Heart right ventricle (tissue), 16 donors: ENCODE measurements at regions of chr15 and their contacts with region 1.

Region 1: DNA sequence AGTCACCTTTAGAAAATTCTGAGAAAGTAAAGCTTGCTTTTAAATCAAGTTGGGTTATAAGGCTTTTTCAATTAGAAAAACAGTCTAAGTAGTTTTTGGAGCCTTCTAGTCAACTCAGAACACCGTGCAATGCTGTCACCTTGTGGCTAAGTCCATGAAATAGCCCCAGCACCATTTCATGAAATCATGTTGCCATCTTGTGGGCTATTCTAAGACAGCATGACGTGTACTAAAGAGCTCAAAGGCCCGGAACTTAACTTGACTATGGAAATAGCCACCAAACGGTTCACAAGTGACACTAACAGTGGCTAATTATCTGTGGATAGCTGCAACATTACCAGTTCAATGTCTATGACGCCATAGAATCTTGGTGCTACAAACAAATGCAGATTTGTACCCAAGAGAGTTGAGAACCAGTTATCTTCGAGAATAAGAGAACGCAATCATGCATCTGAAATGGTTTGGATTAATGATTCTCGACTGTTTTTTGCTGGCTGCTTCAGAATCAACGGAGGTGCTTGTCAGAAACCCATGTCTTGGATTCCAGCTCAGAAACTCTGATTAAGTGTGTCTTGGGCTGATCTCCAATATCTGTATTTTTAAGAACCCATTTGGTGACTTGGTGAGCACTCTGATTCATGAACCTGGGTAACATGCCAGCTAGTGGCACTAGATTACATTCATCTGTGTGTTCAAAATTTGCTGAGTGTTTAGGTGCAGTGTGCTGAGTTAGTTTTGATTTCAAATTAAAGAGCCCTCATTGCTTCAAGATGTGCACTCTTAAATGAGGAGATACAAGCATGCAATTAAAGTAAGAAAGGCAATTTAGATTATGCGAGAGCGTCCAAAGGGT is 111.2 kb upstream of the MCTP2 start:
- DNase-seq: peak in 1 of 2 donors; percentile 73
- ATAC-seq: peak; percentile 90 to 97 (median 94)
- H3K4me3 ChIP-seq: no peak overlapping the region
- H3K27ac ChIP-seq: peak overlapping the region in 8 of 10 donors; percentile 1 to 81 (median 54)
- H3K4me1 ChIP-seq: peaks cover 0 to 17% (median 0%) of the 10 kb centered on the region in 9 donors
- H3K27me3 ChIP-seq: no peaks in the 10 kb centered on the region
- CTCF ChIP-seq: peak; percentile 77 to 95 (median 85)

Region 2: GRCh38 chr15:92797168-92797951 is 1322.8 kb before region 1 on chr15:
- intact Hi-C with region 1: loop called in 1 of 10 experiments (anchors 10 kb)
- DNase-seq: peak in 1 of 2 donors; percentile 65
- ATAC-seq: peak in 7 of 8 donors; percentile 59 to 76 (median 63)
- H3K4me3 ChIP-seq: no peak overlapping the region
- H3K27ac ChIP-seq: peak overlapping the region in 3 of 10 donors; percentile 38 to 64 (median 49)
- H3K4me1 ChIP-seq: peaks cover 0 to 20% (median 10%) of the 10 kb centered on the region in 9 donors
- H3K27me3 ChIP-seq: no peaks in the 10 kb centered on the region
- CTCF ChIP-seq: peak; percentile 65 to 86 (median 79)

Region 3: DNA sequence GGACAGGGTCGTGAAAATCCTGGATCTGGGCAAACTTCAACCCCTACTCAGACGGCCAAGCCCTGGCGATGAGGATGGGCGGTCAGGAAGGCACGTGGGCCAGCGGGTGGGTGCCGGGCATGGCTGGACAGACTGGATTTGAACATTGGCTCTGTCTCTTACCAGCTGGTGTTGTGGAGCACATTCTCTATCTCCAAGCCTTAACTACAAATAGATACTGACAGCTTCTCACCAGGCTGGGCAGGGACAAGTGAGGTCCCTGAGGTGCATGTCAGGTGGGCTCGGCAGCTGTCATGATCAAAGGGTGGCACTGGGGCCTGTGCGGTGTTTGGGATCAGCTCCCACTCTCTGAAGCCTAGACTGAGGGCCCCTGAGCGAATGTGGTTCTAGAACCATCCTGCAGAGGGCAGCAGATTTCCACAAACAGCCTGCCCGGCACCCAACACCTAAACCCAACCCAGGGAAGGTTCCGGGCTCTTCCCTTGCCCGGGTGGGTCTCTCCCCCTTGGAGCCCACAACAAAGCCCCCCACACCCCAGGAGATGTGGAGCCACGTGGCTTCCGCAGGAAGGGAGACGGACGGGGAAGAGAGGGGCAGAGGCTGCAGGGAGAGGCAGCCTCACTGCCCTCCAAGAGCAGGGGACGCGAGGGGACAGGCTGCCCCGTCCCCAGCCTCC is 1089.6 kb before region 1 on chr15:
- intact Hi-C with region 1: loop called (anchors 1 to 5 kb)
- DNase-seq: peak; percentile 55 to 75
- ATAC-seq: peak; percentile 49 to 78 (median 74)
- H3K4me3 ChIP-seq: no peak overlapping the region
- H3K27ac ChIP-seq: peak overlapping the region in 9 of 10 donors; percentile 51 to 91 (median 85)
- H3K4me1 ChIP-seq: peaks cover 24 to 55% (median 48%) of the 10 kb centered on the region in 9 donors
- H3K27me3 ChIP-seq: no peaks in the 10 kb centered on the region
- CTCF ChIP-seq: peak; percentile 75 to 92 (median 89)

Region 4: GRCh38 chr15:93035953-93036800 is 1084.0 kb before region 1 on chr15:
- intact Hi-C with region 1: loop called in 6 of 10 experiments (anchors 2 to 5 kb)
- DNase-seq: no peak
- ATAC-seq: peak in 4 of 8 donors; percentile 22 to 46 (median 38)
- H3K4me3 ChIP-seq: no peak overlapping the region
- H3K27ac ChIP-seq: peak overlapping the region in 2 of 10 donors; percentile 58 to 64
- H3K4me1 ChIP-seq: peaks cover 0 to 35% (median 5%) of the 10 kb centered on the region in 9 donors
- H3K27me3 ChIP-seq: no peaks in the 10 kb centered on the region
- CTCF ChIP-seq: peak; percentile 33 to 68 (median 59)

Region 5: GRCh38 chr15:93495799-93496637 is 624.1 kb before region 1 on chr15:
- intact Hi-C with region 1: no loop called
- DNase-seq: peak in 1 of 2 donors; percentile 23
- ATAC-seq: peak; percentile 55 to 87 (median 78)
- H3K4me3 ChIP-seq: no peak overlapping the region
- H3K27ac ChIP-seq: peak overlapping the region in 2 of 10 donors; percentile 45 to 65
- H3K4me1 ChIP-seq: peaks cover 0 to 14% (median 0%) of the 10 kb centered on the region in 9 donors
- H3K27me3 ChIP-seq: no peaks in the 10 kb centered on the region
- CTCF ChIP-seq: no peak

Region 6: GRCh38 chr15:93837450-93837849 is 282.7 kb before region 1 on chr15:
- intact Hi-C with region 1: no loop called
- DNase-seq: no peak
- ATAC-seq: no peak
- H3K4me3 ChIP-seq: no peak overlapping the region
- H3K27ac ChIP-seq: no peak overlapping the region
- H3K4me1 ChIP-seq: no peaks in the 10 kb centered on the region
- H3K27me3 ChIP-seq: no peaks in the 10 kb centered on the region
- CTCF ChIP-seq: no peak

Region 7: DNA sequence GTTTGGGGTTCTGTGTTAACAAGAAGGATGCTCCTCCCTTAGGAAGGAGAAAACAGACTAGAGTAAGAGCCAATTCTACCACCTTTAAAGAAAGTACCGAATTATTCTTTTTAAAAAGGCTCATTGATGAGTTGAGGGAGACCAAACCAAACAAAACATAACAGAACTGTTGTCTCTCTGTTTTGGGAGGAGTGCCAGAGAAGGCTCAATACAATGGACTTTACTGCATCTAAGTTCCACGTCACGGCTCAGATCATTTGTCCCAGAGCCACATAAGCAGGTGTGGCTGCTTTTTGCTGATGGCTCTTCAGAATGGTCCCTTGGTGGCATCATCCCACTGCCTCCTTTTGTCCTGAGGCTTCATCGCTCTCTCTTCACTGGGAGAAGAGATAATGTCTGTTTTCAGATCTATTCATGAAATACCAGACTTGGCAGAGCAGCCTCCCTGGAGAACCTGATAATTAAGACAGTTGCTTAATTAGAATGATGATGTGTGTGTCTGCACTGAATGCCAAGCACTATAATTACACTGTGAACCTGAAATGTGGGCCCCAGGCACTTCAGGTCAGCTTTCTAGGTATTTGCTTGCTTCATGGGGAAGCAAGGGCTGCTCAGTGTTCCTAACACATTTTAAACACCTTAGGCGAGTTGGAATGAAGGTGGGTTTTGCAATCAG is 224.0 kb before region 1 on chr15:
- intact Hi-C with region 1: no loop called
- DNase-seq: no peak
- ATAC-seq: no peak
- H3K4me3 ChIP-seq: no peak overlapping the region
- H3K27ac ChIP-seq: no peak overlapping the region
- H3K4me1 ChIP-seq: no peaks in the 10 kb centered on the region
- H3K27me3 ChIP-seq: peaks cover 0 to 4% (median 0%) of the 10 kb centered on the region in 7 donors
- CTCF ChIP-seq: no peak

Region 8: DNA sequence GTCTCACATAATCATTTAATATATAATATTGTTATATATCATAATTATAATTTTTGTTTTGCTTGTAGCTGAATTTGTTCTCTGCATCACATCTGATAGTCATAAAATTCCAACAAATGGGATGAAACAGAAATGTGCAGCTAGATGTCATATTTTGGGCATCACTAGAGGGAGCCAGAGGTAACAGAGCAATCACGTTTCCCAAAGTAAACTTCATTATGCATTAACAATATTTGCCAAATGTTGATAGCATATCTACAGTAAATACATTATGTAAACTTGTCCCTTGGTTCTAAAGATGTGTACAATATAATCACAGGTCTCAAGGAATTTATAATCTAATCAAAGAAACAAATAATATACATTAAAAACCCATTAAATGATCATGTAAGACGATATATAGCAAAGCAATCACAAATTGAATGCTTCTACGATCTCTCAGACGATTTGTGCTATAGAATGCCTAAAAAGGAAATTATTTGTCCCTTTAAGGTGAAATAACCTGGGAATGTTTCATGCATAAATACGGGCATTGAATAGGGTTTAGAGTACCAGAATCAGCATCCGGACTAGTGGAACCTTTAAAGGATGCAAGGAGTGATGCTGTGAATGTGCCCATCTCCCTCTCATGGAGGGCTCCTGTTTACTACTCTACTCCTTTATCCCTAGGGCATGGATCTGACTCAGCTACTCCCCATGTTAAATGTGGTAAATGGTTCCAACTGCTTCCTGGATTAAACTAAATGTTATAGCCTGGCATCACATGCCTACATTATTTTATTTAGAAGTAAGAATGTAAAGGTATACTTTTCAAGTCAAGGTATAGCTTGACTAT is 122.8 kb before region 1 on chr15:
- intact Hi-C with region 1: loop called in 6 of 10 experiments (anchors 5 to 10 kb)
- DNase-seq: no peak
- ATAC-seq: no peak
- H3K4me3 ChIP-seq: no peak overlapping the region
- H3K27ac ChIP-seq: no peak overlapping the region
- H3K4me1 ChIP-seq: peaks cover 0 to 8% (median 0%) of the 10 kb centered on the region in 9 donors
- H3K27me3 ChIP-seq: no peaks in the 10 kb centered on the region
- CTCF ChIP-seq: peak; percentile 33 to 75 (median 60)

Region 9: GRCh38 chr15:94004697-94005096 is 115.5 kb before region 1 on chr15:
- intact Hi-C with region 1: loop called in 6 of 10 experiments (anchors 5 to 10 kb)
- DNase-seq: peak; percentile 16 to 24
- ATAC-seq: peak in 7 of 8 donors; percentile 36 to 90 (median 57)
- H3K4me3 ChIP-seq: no peak overlapping the region
- H3K27ac ChIP-seq: peak overlapping the region in 3 of 10 donors; percentile 20 to 39 (median 25)
- H3K4me1 ChIP-seq: peaks cover 0 to 8% (median 0%) of the 10 kb centered on the region in 9 donors
- H3K27me3 ChIP-seq: peaks cover 0 to 8% (median 0%) of the 10 kb centered on the region in 7 donors
- CTCF ChIP-seq: no peak